Esophagus squamous epithelium (tissue), 5 donors: ENCODE measurements at regions of chr20 and their contacts with region 1.

Region 1: GRCh38 chr20:34579191-34579978 is 20.9 kb downstream of the MAP1LC3A start:
- DNase-seq: no peak
- H3K4me3 ChIP-seq: no peak overlapping the region
- H3K27ac ChIP-seq: peak overlapping the region; percentile 67 to 79 (median 77)
- H3K4me1 ChIP-seq: peaks cover 12 to 58% (median 47%) of the 10 kb centered on the region in 3 donors
- H3K27me3 ChIP-seq: no peaks in the 10 kb centered on the region
- CTCF ChIP-seq: peak in 5 of 6 experiments; percentile 44 to 79 (median 70)
- POLR2A ChIP-seq: no peak

Region 2: GRCh38 chr20:34334654-34335407 is 244.6 kb before region 1 on chr20:
- intact Hi-C with region 1: no loop called
- DNase-seq: no peak
- H3K4me3 ChIP-seq: no peak overlapping the region
- H3K27ac ChIP-seq: peak overlapping the region; percentile 51 to 83 (median 76)
- H3K4me1 ChIP-seq: peaks cover 10 to 34% (median 10%) of the 10 kb centered on the region in 3 donors
- H3K27me3 ChIP-seq: no peaks in the 10 kb centered on the region
- CTCF ChIP-seq: no peak
- POLR2A ChIP-seq: no peak

Region 3: GRCh38 chr20:34704177-34705007 is 125.0 kb after region 1 on chr20 and contains the start of gene TP53INP2:
- intact Hi-C with region 1: loop called (anchors 5 kb)
- DNase-seq: peak; percentile 70
- H3K4me3 ChIP-seq: peak within 1 kb of the TSS; percentile 76 to 91 (median 88)
- H3K27ac ChIP-seq: peak within 1 kb of the TSS; percentile 93 to 100 (median 98)
- H3K4me1 ChIP-seq: peaks cover 10 to 54% (median 26%) of the 10 kb centered on the region in 3 donors
- H3K27me3 ChIP-seq: no peaks in the 10 kb centered on the region
- CTCF ChIP-seq: peak in 1 of 6 experiments; percentile 3
- POLR2A ChIP-seq: peak in 3 of 4 donors; percentile 68 to 89 (median 78)
- total RNA-seq, gene TP53INP2: 11.8 to 40.8 (median 36.2) TPM

Region 4: DNA sequence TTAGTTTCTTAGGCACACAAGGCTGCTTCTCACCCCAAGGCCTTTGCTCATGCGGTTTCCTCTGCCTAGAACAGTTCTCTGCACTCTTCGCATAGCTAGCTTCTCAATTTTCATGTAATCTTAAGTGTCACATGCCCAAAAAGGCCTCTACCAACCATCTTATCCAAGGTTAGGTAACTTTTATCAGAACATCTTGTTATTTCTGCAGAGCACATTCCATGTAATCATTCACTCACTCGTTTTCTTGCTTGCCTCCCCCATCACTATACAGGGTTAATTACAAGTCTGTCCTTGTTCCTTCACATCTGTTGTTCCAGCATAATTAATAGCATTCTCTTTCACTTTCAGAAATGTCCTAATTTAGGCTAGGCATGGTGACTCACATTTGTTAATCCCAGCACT is 192.3 kb after region 1 on chr20:
- intact Hi-C with region 1: loop called (anchors 10 kb)
- DNase-seq: no peak
- H3K4me3 ChIP-seq: no peak overlapping the region
- H3K27ac ChIP-seq: no peak overlapping the region
- H3K4me1 ChIP-seq: no peaks in the 10 kb centered on the region
- H3K27me3 ChIP-seq: no peaks in the 10 kb centered on the region
- CTCF ChIP-seq: no peak
- POLR2A ChIP-seq: no peak